ENCODE measurements at regions of chr9 and their contacts with region 1.

Region 1: GRCh38 chr9:121557581-121558447 is 58.2 kb upstream of the GGTA1 start:
- DNase-seq: peak; percentile 55 to 95
- H3K4me3 ChIP-seq: peak overlapping the region in 1 of 2 donors; percentile 2
- H3K27ac ChIP-seq: peak overlapping the region; percentile 76 to 85
- H3K4me1 ChIP-seq: peaks cover 18 to 29% of the 10 kb centered on the region in 2 donors
- H3K27me3 ChIP-seq: no peaks in the 10 kb centered on the region
- CTCF ChIP-seq: peak in 1 of 3 experiments; percentile 14

Region 2: DNA sequence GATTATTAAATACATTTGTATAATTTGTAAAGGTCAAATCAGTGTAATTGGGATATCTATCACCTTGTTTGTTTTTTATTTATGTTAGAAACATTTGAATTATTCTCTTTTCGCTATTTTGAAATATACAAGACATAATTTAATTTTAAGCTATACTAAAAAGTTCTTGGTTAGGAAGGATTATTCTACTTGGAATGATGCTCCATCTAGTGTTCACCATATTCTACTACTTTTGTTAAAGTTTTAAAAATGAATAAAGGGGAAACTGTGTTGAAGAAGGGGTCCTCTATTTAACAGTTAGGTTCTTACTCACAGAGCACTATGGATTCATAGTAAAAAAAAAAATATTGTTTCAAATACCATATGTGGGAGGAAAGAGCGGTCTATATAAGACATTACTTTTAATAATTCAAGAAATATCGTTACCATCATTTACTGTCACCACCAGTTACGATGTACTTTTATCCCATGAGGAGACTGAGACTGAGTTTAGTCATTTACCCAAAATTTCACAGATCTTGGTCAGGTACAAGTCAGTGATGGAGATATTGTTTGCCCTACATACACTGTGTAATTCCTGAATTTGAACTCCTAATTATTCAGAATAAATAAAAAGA is 181.5 kb before region 1 on chr9:
- intact Hi-C with region 1: no loop called
- DNase-seq: no peak
- H3K4me3 ChIP-seq: no peak overlapping the region
- H3K27ac ChIP-seq: no peak overlapping the region
- H3K4me1 ChIP-seq: peaks cover 0 to 19% of the 10 kb centered on the region in 2 donors
- H3K27me3 ChIP-seq: no peaks in the 10 kb centered on the region
- CTCF ChIP-seq: peak; percentile 57 to 59 (median 58)

Region 3: GRCh38 chr9:121538246-121538645 is 19.6 kb before region 1 on chr9:
- intact Hi-C with region 1: no loop called
- DNase-seq: no peak
- H3K4me3 ChIP-seq: no peak overlapping the region
- H3K27ac ChIP-seq: no peak overlapping the region
- H3K4me1 ChIP-seq: peaks cover 0 to 7% of the 10 kb centered on the region in 2 donors
- H3K27me3 ChIP-seq: no peaks in the 10 kb centered on the region
- CTCF ChIP-seq: peak in 1 of 3 experiments; percentile 20

Region 4: GRCh38 chr9:121598965-121599871 is 41.4 kb after region 1 on chr9:
- intact Hi-C with region 1: loop called (anchors 2 kb)
- DNase-seq: peak; percentile 19 to 83
- H3K4me3 ChIP-seq: peak overlapping the region; percentile 74 to 87
- H3K27ac ChIP-seq: peak overlapping the region; percentile 47 to 78
- H3K4me1 ChIP-seq: peaks cover 0 to 24% of the 10 kb centered on the region in 2 donors
- H3K27me3 ChIP-seq: no peaks in the 10 kb centered on the region
- CTCF ChIP-seq: no peak

Measured in ascending aorta (tissue), 2 donors.